ENCODE measurements at regions of chr9 and their contacts with region 1.

Region 1: GRCh38 chr9:72364679-72365524 is at the start of gene ZFAND5:
- DNase-seq: peak; percentile 89
- ATAC-seq: peak; percentile 80
- H3K4me3 Mint-ChIP-seq: peak within 1 kb of the TSS; percentile 96
- H3K27ac Mint-ChIP-seq: peak within 1 kb of the TSS; percentile 98
- H3K4me1 Mint-ChIP-seq: peaks cover 40% of the 10 kb centered on the region
- H3K27me3 Mint-ChIP-seq: no peaks in the 10 kb centered on the region
- CTCF ChIP-seq: no peak
- total RNA-seq, gene ZFAND5: 79.2 and 79.5 TPM in 2 replicates

Region 2: GRCh38 chr9:72228282-72228681 is 136.6 kb before region 1 on chr9:
- CTCF ChIA-PET with region 1: no interaction called
- POLR2A ChIA-PET with region 1: no interaction called
- intact Hi-C with region 1: no loop called
- DNase-seq: no peak
- ATAC-seq: no peak
- H3K4me3 Mint-ChIP-seq: no peak overlapping the region
- H3K27ac Mint-ChIP-seq: no peak overlapping the region
- H3K4me1 Mint-ChIP-seq: no peaks in the 10 kb centered on the region
- H3K27me3 Mint-ChIP-seq: peaks cover 2% of the 10 kb centered on the region
- CTCF ChIP-seq: no peak

Region 3: DNA sequence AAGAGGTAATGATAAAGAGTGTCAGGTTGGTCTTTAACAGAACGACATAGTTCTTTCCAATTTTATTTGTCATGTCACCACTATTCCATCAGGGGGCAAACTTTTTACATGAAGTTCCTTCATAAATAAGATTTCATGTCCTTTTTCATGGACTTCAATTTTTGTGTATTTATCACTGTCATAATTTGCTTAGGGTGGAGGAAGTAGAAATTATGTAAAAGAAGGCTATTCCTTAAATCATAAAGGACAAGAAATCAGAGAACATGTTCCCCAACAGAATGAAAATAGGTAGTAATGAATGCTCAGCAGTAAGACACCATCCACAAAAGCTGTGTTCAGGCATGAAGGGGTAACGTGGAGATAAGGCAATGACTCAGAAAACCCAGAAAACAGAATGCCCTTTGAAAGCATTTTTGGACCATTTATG is 72.6 kb before region 1 on chr9:
- CTCF ChIA-PET with region 1: interaction called, 5 read pairs
- POLR2A ChIA-PET with region 1: interaction called, 10 read pairs
- intact Hi-C with region 1: loop called (anchors 1 kb)
- DNase-seq: no peak
- ATAC-seq: peak; percentile 52
- H3K4me3 Mint-ChIP-seq: no peak overlapping the region
- H3K27ac Mint-ChIP-seq: no peak overlapping the region
- H3K4me1 Mint-ChIP-seq: peaks cover 17% of the 10 kb centered on the region
- H3K27me3 Mint-ChIP-seq: no peaks in the 10 kb centered on the region
- CTCF ChIP-seq: no peak

Region 4: DNA sequence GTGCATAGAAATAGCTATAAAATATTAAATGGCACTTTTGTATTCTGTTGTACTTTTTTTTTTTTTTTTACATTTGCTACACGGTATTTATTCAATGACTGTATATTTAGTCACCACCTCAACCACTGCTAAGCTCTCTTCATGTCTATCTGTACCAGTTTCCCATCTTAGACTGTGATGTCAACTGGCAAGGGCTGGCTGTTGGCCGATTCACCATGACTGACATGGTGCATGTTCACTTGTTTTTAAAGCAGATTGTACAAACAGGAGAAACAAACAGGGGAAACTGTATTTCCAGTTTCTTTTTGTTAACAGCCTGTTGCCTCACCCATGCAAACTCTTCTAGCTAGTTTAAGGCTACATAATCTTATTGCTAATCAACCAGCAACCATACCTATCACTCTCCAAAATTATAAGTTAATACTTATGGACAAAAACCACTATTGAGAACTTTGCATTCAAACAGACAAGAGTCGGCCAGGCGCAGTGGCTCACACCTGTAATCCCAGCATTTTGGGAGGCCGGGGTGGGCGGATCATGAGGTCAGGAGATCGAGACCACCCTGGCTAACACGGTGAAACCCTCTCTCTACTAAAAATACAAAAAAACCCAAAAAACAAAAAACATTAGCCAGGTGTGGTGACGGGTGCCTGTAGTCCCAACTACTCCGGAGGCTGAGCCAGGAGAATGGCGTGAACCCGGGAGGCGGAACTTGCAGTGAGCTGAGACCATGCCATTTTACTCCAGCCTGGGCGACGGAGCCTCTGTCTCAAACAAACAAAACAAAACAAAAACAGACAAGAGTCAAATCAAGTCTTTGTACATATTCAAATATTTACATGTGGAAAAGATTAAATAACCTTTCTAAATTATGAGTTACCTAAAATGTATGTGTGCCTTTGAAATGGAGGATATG is 13.1 kb before region 1 on chr9:
- CTCF ChIA-PET with region 1: no interaction called
- POLR2A ChIA-PET with region 1: interaction called, 6 read pairs
- intact Hi-C with region 1: loop called (anchors 1 kb)
- DNase-seq: no peak
- ATAC-seq: no peak
- H3K4me3 Mint-ChIP-seq: no peak overlapping the region
- H3K27ac Mint-ChIP-seq: no peak overlapping the region
- H3K4me1 Mint-ChIP-seq: peaks cover 11% of the 10 kb centered on the region
- H3K27me3 Mint-ChIP-seq: no peaks in the 10 kb centered on the region
- CTCF ChIP-seq: no peak

Region 5: DNA sequence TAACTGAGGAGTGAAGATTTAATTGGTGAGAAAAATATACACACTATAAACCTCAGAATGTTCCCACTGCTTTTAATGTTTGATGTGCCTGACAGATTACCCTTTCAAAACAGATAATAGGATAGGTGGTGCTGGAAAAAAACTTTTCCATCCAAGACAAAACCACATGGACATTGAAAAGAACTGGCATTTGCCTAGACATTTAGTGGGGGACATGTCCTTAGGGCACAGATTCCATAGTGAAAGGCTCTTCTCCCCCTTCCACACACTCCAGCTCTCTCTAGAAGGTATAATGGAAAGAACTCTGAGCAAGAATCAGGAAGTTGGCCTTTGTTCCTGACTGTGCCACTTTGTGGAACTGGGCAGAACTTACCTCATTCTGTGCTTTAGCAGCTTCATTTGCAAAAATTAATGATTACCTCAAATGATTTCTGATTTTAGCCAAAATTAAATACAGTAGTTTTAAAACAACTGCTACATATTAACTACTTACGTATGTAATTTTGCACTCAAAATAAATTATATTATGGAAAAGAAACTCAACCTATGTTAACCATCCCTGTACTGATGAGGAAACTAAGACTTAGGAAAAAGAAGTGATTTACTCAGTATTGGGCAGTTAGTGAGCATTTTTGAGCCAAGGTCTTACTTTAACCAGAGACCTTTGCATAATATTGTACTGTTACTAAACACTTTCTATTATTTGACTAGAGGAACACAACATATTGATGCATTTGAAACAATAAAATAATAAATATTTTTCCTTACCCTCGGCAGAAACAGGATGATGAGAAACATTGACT is 199.8 kb after region 1 on chr9:
- CTCF ChIA-PET with region 1: no interaction called
- POLR2A ChIA-PET with region 1: no interaction called
- intact Hi-C with region 1: no loop called
- DNase-seq: no peak
- ATAC-seq: no peak
- H3K4me3 Mint-ChIP-seq: no peak overlapping the region
- H3K27ac Mint-ChIP-seq: no peak overlapping the region
- H3K4me1 Mint-ChIP-seq: no peaks in the 10 kb centered on the region
- H3K27me3 Mint-ChIP-seq: peaks cover 4% of the 10 kb centered on the region
- CTCF ChIP-seq: no peak

Region 6: GRCh38 chr9:72592502-72593403 is 227.9 kb after region 1 on chr9:
- CTCF ChIA-PET with region 1: no interaction called
- POLR2A ChIA-PET with region 1: no interaction called
- intact Hi-C with region 1: loop called (anchors 2 kb)
- DNase-seq: no peak
- ATAC-seq: peak; percentile 68
- H3K4me3 Mint-ChIP-seq: no peak overlapping the region
- H3K27ac Mint-ChIP-seq: no peak overlapping the region
- H3K4me1 Mint-ChIP-seq: peaks cover 4% of the 10 kb centered on the region
- H3K27me3 Mint-ChIP-seq: peaks cover 2% of the 10 kb centered on the region
- CTCF ChIP-seq: peak; percentile 41

Measured in activated B cell treated with CpG ODN at 0.5 μM for 24 hours (primary cell).